IMR-90 (cell line): ENCODE measurements at regions of chr1 and their contacts with region 1.

Region 1: DNA sequence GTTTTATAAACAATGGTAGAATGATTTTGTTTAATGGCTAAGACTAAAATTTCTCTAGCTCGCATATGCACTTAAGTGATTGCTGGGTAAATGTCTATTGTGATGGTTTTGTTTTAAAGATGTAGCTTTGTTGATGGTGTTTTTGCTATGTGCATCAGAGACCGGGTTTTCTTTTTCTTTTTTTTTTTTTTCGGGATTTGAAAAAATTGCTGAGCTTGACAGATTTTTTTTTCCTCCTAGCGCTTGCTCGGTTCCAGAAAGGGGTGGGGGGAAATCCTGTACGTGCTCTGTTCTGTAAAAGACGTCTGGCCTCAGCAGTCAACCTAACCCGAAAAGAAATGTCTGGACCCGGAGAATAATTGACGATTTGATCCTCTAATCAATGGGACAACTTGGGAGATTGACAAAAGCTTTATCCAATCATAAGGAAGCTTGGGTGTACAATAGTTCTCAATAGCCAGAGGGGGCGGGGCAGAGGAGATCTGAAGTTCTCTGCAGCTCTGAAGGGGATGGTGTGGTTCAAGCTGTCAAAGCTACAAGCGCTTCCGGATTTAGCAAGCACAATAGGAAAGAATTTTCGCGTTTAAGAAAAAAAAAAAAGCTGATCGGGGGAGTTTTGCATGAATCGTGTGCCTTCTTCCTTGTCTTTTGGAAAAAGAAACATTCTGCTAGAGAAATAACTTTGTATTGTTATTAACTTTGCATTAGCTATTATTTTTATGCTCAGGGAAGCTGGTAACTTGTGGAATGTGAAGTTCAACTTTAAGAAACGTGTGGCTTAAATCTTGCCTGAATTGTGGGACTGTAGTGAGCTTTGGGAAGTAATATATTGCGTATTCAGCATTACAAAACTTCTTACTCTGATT is 4.5 kb upstream of the NFIA start:
- DNase-seq: peak; percentile 100
- ATAC-seq: peak; percentile 74
- H3K4me3 ChIP-seq: peak overlapping the region; percentile 82
- H3K27ac ChIP-seq: no peak overlapping the region
- H3K4me1 ChIP-seq: no peaks in the 10 kb centered on the region
- H3K27me3 ChIP-seq: no peaks in the 10 kb centered on the region
- CTCF ChIP-seq: no peak
- POLR2A ChIP-seq: no peak
- RAD21 ChIP-seq: no peak

Region 2: DNA sequence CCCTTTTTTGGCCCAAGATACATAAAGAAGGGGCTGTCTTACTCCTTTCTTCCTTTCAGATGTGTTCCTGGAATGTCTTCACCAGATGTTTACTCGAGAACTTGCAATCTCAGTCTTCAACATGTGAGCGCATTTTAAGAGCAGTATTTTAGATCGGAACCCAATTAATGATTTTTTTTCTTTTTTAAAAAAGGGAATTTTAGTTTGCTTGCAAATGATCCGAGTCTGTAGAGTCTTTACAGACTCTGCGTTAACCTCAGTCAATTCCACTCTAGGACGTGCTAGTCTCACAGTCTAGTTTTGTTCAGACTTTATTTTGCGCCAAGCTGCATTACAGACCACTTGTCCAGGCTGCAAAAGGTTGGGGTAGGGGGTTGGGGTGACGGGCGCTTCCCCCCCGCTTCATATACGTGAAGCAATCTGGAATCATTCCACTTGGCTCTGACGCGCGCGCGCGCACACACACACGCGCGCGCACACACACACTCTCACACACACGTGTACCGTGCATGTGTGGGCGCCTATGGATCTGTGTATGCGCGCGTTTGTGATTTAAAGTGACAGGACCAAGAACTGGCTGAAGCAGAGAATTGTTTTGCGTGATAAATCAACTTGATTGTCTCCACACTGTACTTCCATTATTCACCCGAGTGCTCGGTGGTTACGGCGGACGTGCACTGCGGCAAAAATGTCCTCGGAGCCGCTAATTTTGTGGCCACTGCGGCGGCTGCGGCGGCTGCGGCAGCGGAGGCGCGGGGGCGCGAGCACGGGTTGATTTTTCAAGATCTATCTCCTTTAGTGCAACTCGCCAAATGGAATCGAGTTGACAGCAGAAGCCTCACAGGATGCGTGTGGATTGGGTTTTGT is 21.1 kb before region 1 on chr1:
- CTCF ChIA-PET with region 1: no interaction called
- POLR2A ChIA-PET with region 1: interaction called, 3 read pairs
- dilution Hi-C with region 1: no loop called
- in situ Hi-C with region 1: no loop called
- intact Hi-C with region 1: loop called (anchors 1 kb)
- DNase-seq: peak; percentile 38
- ATAC-seq: peak; percentile 66
- H3K4me3 ChIP-seq: peak overlapping the region; percentile 53
- H3K27ac ChIP-seq: no peak overlapping the region
- H3K4me1 ChIP-seq: no peaks in the 10 kb centered on the region; the same call in 1 of the 2 replicates
- H3K27me3 ChIP-seq: peaks cover 33% of the 10 kb centered on the region
- CTCF ChIP-seq: no peak
- POLR2A ChIP-seq: no peak
- RAD21 ChIP-seq: no peak

Region 3: GRCh38 chr1:61270761-61271411 is 193.0 kb after region 1 on chr1:
- CTCF ChIA-PET with region 1: no interaction called
- POLR2A ChIA-PET with region 1: no interaction called
- dilution Hi-C with region 1: no loop called
- in situ Hi-C with region 1: no loop called
- intact Hi-C with region 1: loop called (anchors 5 kb)
- DNase-seq: peak; percentile 71
- ATAC-seq: peak; percentile 96
- H3K4me3 ChIP-seq: no peak overlapping the region
- H3K27ac ChIP-seq: no peak overlapping the region
- H3K4me1 ChIP-seq: peaks cover 2% of the 10 kb centered on the region; the same call in 1 of the 2 replicates
- H3K27me3 ChIP-seq: no peaks in the 10 kb centered on the region
- CTCF ChIP-seq: no peak
- POLR2A ChIP-seq: no peak
- RAD21 ChIP-seq: no peak

Region 4: DNA sequence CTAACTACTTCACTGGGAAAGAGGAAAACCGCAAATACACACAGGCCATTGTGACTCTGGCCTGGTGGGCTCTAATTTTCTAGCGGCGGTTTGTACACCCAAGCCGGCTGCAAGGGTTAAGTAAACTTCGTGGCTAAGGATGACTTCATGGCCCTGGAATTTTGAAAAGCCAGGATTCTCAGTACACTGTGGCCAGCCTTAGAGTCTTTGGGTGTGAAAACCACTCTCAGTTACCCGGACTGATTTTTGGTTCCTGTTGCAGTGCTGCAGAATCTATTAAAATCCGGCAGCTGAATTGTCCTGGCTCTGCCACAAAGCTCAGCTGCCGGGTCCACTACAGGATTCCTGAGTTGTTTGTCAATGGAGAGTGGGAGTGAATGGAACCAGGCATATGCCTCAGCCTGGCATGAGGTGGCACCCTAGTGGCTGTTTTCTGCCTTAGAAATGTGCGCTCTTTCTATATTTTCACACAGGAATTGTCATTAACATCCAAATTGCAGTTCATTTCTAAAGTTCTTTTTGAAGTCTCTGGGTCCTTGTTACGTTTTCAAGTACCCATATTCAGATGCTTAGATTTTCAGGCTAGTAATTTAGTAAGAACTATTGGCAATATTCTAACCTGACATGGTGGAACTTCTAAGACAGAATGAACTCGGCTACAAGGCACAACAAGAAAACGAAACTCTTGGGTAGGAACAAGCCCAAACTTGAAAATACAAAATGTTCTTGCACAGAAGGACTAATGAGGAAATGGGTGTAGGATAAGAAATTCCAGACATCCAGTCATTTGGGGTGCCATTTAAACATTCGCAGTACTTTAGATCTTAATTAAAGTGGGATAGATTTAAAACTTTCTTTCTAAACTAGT is 260.3 kb after region 1 on chr1:
- CTCF ChIA-PET with region 1: interaction called, 4 read pairs
- POLR2A ChIA-PET with region 1: interaction called, 5 read pairs
- dilution Hi-C with region 1: no loop called
- in situ Hi-C with region 1: no loop called
- intact Hi-C with region 1: loop called (anchors 2 kb)
- DNase-seq: peak; percentile 75
- ATAC-seq: peak; percentile 94
- H3K4me3 ChIP-seq: no peak overlapping the region
- H3K27ac ChIP-seq: peak overlapping the region; percentile 6; the same call in 1 of the 2 replicates
- H3K4me1 ChIP-seq: no peaks in the 10 kb centered on the region
- H3K27me3 ChIP-seq: peaks cover 29% of the 10 kb centered on the region
- CTCF ChIP-seq: peak; percentile 60
- POLR2A ChIP-seq: no peak
- RAD21 ChIP-seq: peak; percentile 66

Region 5: DNA sequence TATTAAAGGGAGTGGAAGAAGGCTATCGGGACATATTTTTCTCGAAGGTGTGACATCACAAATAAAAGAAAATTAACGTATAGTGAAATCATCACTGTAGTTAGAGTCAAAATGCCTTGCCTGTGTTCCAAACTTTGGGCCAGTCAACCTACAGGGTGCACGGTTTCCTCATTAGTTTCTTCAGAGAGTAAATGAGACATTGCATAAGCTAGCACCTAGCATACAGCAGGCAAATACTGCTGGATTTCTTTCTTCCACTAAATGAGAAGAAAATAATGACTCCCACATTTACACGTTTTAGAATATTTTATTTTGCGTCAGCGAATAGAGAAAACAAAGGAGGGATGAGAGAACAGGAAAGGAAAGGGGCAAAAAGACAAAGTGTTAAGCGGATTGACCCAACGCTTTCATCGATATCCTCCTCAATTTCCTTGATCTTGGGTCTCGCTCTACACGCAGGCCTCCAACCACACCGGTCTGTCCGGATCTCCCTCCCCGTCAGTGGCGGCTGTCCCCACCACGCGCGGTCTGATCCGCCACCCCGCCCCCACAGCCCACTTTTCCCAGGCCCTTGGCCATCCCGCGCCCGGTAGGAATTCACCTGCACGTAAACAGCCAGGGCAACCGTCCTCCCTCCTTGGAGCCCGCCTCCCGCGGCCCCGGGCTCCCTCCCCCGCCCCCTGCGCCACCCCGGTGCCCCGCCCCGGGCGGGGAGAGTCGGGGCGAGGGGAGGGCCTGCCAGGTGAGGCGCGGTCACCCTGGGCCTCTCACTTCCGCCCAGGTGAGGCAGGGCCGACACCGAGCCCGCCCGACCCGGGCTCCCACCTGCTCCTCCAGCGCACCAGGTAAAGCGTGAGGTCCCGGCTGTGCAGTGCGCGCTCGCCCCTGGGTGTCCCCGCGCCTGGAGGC is 664.1 kb after region 1 on chr1 and contains the start of gene PATJ:
- CTCF ChIA-PET with region 1: interaction called, 4 read pairs
- POLR2A ChIA-PET with region 1: no interaction called
- dilution Hi-C with region 1: no loop called
- in situ Hi-C with region 1: no loop called
- intact Hi-C with region 1: loop called (anchors 10 kb)
- DNase-seq: peak; percentile 4
- ATAC-seq: peak; percentile 55
- H3K4me3 ChIP-seq: peak within 1 kb of the TSS; percentile 80
- H3K27ac ChIP-seq: peak within 1 kb of the TSS; percentile 82
- H3K4me1 ChIP-seq: peaks cover 5% of the 10 kb centered on the region; the same call in 1 of the 2 replicates
- H3K27me3 ChIP-seq: no peaks in the 10 kb centered on the region
- CTCF ChIP-seq: no peak
- POLR2A ChIP-seq: no peak
- RAD21 ChIP-seq: no peak
- total RNA-seq, gene PATJ: 3.4 and 5.3 TPM in 2 replicates